ENCODE measurements at regions of chr14 and their contacts with region 1.

Region 1: GRCh38 chr14:60331201-60332045 is 82.4 kb downstream of the PPM1A start:
- DNase-seq: peak; percentile 96
- H3K4me3 ChIP-seq: peak overlapping the region; percentile 60
- H3K27ac ChIP-seq: peak overlapping the region; percentile 97
- H3K4me1 ChIP-seq: peaks cover 61% of the 10 kb centered on the region
- CTCF ChIP-seq: peak; percentile 100

Region 2: GRCh38 chr14:59189786-59190771 is 1141.3 kb before region 1 on chr14:
- CTCF ChIA-PET with region 1: interaction called, 3 read pairs
- POLR2A ChIA-PET with region 1: no interaction called
- intact Hi-C with region 1: loop called (anchors 5 kb)
- DNase-seq: peak; percentile 83
- H3K4me3 ChIP-seq: peak overlapping the region; percentile 85
- H3K27ac ChIP-seq: peak overlapping the region; percentile 73
- H3K4me1 ChIP-seq: peaks cover 61% of the 10 kb centered on the region
- CTCF ChIP-seq: peak; percentile 74

Region 3: GRCh38 chr14:60195179-60195810 is 136.1 kb before region 1 on chr14:
- CTCF ChIA-PET with region 1: interaction called, 3 read pairs
- POLR2A ChIA-PET with region 1: interaction called, 12 read pairs
- intact Hi-C with region 1: no loop called
- DNase-seq: peak; percentile 67
- H3K4me3 ChIP-seq: no peak overlapping the region
- H3K27ac ChIP-seq: no peak overlapping the region
- H3K4me1 ChIP-seq: peaks cover 24% of the 10 kb centered on the region
- CTCF ChIP-seq: peak; percentile 78

Region 4: DNA sequence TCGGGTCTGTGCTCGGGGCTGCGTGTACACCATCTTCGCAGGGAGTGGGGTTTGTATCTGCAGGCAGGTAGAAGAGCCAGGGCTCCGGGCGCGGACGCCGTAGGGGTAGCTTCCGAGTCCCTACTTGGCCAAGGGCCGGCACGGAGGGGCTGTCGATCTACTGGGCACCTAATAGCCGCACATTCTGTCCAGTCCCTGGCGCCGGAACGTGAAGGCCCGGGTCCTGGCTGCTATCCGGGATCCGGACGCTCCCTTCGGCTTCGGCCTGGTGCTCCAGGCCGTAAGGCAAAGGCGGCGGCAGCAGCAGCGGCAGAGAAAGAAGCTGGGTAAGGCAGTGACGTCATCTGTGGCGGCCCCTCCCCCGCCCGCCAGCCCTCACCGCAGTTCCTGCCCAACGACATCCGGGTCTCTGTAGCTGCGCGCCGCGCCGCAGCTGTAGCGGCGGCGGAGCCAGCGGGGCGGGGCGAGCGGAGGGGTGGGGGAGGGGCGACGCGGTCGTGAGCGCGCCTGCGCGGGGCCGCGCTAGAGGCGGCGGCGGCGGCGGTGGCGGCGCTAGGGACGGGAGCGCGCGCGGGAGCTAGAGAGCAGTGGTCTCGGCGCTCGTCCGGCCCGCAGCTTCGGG is 82.6 kb before region 1 on chr14 and contains the start of gene PPM1A:
- CTCF ChIA-PET with region 1: interaction called, 5 read pairs
- POLR2A ChIA-PET with region 1: interaction called, 115 read pairs
- intact Hi-C with region 1: loop called (anchors 1 kb)
- DNase-seq: peak; percentile 97
- H3K4me3 ChIP-seq: peak within 1 kb of the TSS; percentile 87
- H3K27ac ChIP-seq: peak within 1 kb of the TSS; percentile 92
- H3K4me1 ChIP-seq: peaks cover 55% of the 10 kb centered on the region
- CTCF ChIP-seq: no peak
- total RNA-seq, gene PPM1A: 25.4 and 28.8 TPM in 2 replicates

Region 5: GRCh38 chr14:60315196-60315990 is 16.0 kb before region 1 on chr14:
- CTCF ChIA-PET with region 1: no interaction called
- POLR2A ChIA-PET with region 1: interaction called, 13 read pairs
- intact Hi-C with region 1: no loop called
- DNase-seq: no peak
- H3K4me3 ChIP-seq: no peak overlapping the region
- H3K27ac ChIP-seq: no peak overlapping the region
- H3K4me1 ChIP-seq: peaks cover 10% of the 10 kb centered on the region
- CTCF ChIP-seq: no peak

Region 6: DNA sequence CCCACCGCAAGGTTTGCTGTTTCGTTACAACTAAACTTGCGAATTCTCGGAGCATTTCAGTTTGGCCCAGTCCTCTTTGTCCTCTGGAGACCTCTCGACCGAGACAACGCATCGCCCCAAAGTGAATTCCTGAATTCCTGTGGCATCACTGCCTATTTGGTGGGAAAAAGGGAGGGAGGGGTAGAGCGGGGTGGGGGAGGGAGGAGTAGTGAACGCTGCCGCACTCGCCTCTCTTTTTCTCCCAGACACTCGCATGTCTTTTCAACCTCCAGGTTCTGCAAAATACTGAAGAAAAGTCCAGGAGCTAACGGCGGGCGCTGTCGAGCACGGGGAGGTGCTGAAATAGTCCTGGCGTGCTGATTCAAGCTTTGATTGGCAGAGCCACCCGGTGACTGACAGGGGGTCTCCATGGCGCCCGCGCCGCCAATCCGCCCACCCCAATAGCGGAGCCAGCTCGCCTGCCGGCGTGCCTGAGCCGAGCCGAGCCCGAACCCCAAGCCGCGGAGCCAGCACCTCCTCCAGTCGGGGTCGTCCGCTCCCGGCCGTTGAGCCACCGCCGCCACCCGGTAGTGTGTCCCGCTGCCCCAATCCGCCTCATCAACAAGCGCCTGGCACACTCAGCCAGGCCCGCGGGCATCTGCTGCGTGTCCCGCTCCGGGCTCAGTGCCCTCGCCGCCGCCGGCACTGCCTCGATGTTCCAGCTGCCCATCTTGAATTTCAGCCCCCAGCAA is 177.4 kb after region 1 on chr14 and contains the start of gene SIX6:
- CTCF ChIA-PET with region 1: no interaction called
- POLR2A ChIA-PET with region 1: no interaction called
- intact Hi-C with region 1: no loop called
- DNase-seq: no peak
- H3K4me3 ChIP-seq: no peak within 1 kb of the TSS
- H3K27ac ChIP-seq: no peak within 1 kb of the TSS
- H3K4me1 ChIP-seq: no peaks in the 10 kb centered on the region
- CTCF ChIP-seq: no peak
- total RNA-seq, gene SIX6: not detected in 2 replicates

Region 7: DNA sequence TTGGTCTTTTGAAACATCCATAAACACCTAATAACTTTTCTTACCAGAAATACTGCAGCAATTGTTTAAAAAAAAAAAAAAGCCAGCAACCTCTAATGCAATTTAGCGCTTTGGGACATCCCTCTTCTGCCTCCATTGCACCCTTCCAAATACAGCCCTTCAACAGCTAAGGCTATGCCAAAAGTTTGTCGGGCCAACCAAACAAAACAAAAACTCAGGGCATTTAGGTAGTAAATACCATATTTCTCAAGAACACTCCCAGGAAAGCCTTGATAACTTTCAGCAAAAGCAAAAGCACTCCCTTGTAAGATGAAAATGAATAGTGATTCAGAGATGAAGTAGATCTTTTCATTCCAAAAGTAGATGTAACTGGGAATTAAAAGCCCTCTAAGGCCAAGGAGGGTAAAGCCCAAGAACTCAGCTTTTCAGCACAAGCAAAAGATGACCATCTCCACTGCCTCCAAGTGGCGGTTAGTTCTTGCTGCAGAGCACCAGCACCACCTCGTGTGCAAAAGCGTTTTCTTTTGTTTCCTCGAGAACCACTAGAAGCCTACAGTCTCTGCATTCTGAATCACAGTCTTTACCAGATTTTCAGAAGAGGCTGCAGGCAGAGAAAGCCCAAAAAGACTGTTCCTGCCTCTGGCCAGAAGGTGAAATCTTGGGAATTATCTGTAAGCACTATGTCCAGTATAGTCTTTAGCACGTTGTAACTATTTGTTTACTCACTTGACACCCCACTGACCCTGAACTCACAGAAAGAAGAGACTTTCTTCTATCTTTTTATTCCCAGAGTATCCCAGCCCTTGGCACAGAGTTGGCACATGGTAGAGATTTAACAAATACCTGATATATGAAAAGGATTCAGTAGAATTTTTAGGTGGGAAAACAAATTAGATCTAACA is 230.7 kb after region 1 on chr14:
- CTCF ChIA-PET with region 1: interaction called, 4 read pairs
- POLR2A ChIA-PET with region 1: interaction called, 6 read pairs
- intact Hi-C with region 1: loop called (anchors 1 kb)
- DNase-seq: peak; percentile 90
- H3K4me3 ChIP-seq: no peak overlapping the region
- H3K27ac ChIP-seq: no peak overlapping the region
- H3K4me1 ChIP-seq: peaks cover 78% of the 10 kb centered on the region
- CTCF ChIP-seq: peak; percentile 97